Gastrocnemius medialis (tissue), 4 donors: ENCODE measurements at regions of chr12 and their contacts with region 1.

Region 1: DNA sequence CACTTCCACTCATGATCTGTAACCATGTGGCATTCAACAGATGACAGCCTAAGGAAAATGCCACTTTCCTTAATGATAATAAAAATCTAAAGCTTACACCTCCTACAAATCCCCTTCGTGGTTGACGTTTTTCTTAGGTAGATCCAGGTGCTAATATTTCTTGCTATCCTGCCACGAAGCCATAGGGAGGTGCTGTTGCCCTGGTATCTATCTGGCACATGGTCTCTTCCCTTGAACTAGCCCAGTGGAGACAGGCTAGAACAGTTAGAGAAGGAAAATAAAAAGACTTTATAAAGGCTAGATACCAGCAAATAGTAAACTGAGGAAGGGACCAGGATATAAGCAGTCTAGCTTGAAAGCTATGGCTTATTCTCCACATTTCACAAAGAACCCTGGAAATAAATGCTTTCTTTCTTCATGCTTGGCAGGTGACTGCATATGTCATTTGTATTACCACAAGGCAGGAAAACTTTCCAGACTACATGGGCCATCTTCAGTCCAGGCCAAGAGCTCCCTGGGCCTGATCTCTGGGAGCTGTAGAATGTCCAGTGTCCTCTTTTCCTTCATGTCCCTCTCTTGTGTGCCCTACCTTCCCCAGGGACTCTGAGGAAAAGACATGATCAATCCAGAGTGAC is 15.3 kb downstream of the SPIC start:
- DNase-seq: peak; percentile 42 to 61
- ATAC-seq: peak; percentile 89 to 98
- H3K4me3 ChIP-seq: no peak overlapping the region
- H3K27ac ChIP-seq: peak overlapping the region; percentile 73 to 83 (median 80)
- H3K4me1 ChIP-seq: peaks cover 14 to 16% of the 10 kb centered on the region in 2 donors
- H3K27me3 ChIP-seq: no peaks in the 10 kb centered on the region
- CTCF ChIP-seq: peak; percentile 53 to 77 (median 66)
- POLR2A ChIP-seq: no peak

Region 2: GRCh38 chr12:101616027-101616494 is 125.7 kb after region 1 on chr12:
- in situ Hi-C with region 1: no loop called
- intact Hi-C with region 1: loop called (anchors 2 kb)
- DNase-seq: no peak
- ATAC-seq: peak; percentile 26 to 72
- H3K4me3 ChIP-seq: peak overlapping the region in 2 of 4 donors; percentile 15 to 24
- H3K27ac ChIP-seq: peak overlapping the region; percentile 85 to 93 (median 92)
- H3K4me1 ChIP-seq: peaks cover 94 to 96% of the 10 kb centered on the region in 2 donors
- H3K27me3 ChIP-seq: no peaks in the 10 kb centered on the region
- CTCF ChIP-seq: no peak
- POLR2A ChIP-seq: peak in 1 of 2 donors; percentile 36

Region 3: GRCh38 chr12:102106905-102107304 is 616.5 kb after region 1 on chr12:
- in situ Hi-C with region 1: no loop called
- intact Hi-C with region 1: no loop called
- DNase-seq: no peak
- ATAC-seq: no peak
- H3K4me3 ChIP-seq: no peak overlapping the region
- H3K27ac ChIP-seq: no peak overlapping the region
- H3K4me1 ChIP-seq: no peaks in the 10 kb centered on the region
- H3K27me3 ChIP-seq: no peaks in the 10 kb centered on the region
- CTCF ChIP-seq: no peak
- POLR2A ChIP-seq: no peak